ENCODE measurements at regions of chr1 and their contacts with region 1.

Region 1: GRCh38 chr1:204398217-204399081 is 13.2 kb downstream of the PPP1R15B start:
- H3K4me3 ChIP-seq: no peak overlapping the region
- H3K27ac ChIP-seq: no peak overlapping the region
- H3K4me1 ChIP-seq: no peaks in the 10 kb centered on the region
- CTCF ChIP-seq: peak; percentile 90

Region 2: GRCh38 chr1:204162231-204163074 is 236.0 kb before region 1 on chr1:
- CTCF ChIA-PET with region 1: interaction called, 54 read pairs
- POLR2A ChIA-PET with region 1: no interaction called
- H3K4me3 ChIP-seq: no peak overlapping the region
- H3K27ac ChIP-seq: no peak overlapping the region
- H3K4me1 ChIP-seq: no peaks in the 10 kb centered on the region
- CTCF ChIP-seq: peak; percentile 95

Region 3: DNA sequence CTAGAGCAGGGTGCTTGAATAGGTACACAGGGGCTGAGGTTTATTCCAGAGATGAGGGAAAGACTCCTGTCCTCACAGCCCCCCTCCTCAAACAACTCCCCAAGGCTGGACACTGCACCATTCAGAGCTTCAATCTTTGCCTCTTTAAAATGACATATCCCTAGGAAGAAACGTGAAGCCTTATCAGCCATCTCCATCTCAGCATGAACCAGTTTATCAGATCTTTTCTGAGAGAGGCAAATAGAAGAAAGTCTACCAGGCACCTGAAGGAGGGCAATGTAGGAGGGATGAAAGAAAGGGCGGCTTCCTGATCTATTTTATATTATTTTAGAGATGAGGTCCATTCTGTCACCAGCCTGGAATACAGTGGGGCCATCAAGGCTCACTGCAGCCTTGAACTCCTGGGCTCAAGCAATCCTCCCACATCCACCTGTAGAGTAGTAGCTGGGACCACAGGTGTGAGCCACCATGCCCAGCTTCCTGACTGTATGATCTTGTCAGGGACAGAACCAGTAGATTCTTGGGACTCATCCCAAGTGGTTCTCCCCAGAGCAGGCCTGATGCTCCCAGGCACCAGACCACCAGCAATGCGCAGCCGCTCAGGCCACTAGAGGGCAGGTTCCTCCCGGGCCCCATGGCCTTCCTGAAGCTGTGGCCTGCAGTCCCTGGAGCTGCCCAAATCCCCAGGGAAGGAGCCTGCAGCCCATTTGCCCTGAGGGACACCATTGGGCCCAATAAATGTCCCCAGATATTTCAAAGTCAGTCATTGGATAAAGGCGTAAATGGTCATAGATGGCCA is 140.3 kb before region 1 on chr1:
- CTCF ChIA-PET with region 1: interaction called, 21 read pairs
- POLR2A ChIA-PET with region 1: no interaction called
- H3K4me3 ChIP-seq: no peak overlapping the region
- H3K27ac ChIP-seq: no peak overlapping the region
- H3K4me1 ChIP-seq: peaks cover 8% of the 10 kb centered on the region; the same call in 1 of the 2 replicates
- CTCF ChIP-seq: peak; percentile 73

Region 4: DNA sequence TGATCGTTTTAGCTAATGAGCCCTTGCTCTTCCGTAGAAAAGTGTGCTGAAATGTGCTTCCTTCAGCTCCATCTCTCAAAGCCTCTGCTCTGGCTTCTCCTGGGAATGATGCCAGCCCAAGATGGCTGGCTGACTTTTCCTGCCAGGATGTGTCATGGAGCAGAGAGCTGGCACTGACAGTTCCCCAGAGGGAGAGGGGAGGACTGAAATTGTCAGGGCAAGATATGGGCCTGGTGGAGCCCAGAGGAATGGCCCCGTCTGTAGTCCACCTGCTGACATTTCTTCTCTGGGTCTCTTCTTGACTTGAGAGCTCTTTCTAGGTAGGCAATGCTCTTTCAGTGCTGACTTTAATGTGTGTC is 13.5 kb before region 1 on chr1:
- CTCF ChIA-PET with region 1: interaction called, 39 read pairs
- POLR2A ChIA-PET with region 1: interaction called, 3 read pairs
- H3K4me3 ChIP-seq: no peak overlapping the region
- H3K27ac ChIP-seq: no peak overlapping the region
- H3K4me1 ChIP-seq: no peaks in the 10 kb centered on the region
- CTCF ChIP-seq: no peak

Region 5: GRCh38 chr1:204417231-204417997 is 19.0 kb after region 1 on chr1:
- CTCF ChIA-PET with region 1: interaction called, 15 read pairs
- POLR2A ChIA-PET with region 1: interaction called, 4 read pairs
- H3K4me3 ChIP-seq: peak overlapping the region; percentile 8; the same call in 1 of the 2 replicates
- H3K27ac ChIP-seq: peak overlapping the region; percentile 60
- H3K4me1 ChIP-seq: peaks cover 16% of the 10 kb centered on the region; the same call in 1 of the 2 replicates
- CTCF ChIP-seq: no peak

Region 6: DNA sequence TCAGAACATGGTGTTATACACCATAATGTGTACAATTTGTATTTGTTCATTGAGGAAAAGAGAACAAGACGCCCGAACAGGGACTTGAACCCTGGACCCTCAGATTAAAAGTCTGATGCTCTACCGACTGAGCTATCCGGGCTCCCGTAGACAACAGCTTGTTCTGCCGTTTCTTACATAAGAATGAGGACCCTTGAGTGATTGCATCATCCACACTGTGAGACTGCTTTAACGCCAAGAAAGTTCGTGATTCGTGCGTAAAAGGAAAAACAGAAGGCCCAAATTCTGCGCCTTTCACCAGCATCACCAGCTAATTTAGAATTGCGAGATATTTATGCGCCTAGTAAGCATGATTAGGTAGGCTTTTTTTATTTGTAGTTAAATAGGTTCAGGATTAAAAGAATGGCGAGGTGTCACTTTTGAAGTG is 108.5 kb after region 1 on chr1:
- CTCF ChIA-PET with region 1: interaction called, 19 read pairs
- POLR2A ChIA-PET with region 1: interaction called, 4 read pairs
- H3K4me3 ChIP-seq: peak overlapping the region; percentile 58
- H3K27ac ChIP-seq: peak overlapping the region; percentile 78
- H3K4me1 ChIP-seq: no peaks in the 10 kb centered on the region
- CTCF ChIP-seq: no peak

Measured in HEK293 (cell line).